ENCODE measurements at regions of chr3 and their contacts with region 1.

Region 1: GRCh38 chr3:53045518-53046170 is at the start of gene SFMBT1:
- DNase-seq: peak; percentile 74
- ATAC-seq: peak; percentile 57
- H3K4me3 Mint-ChIP-seq: peak within 1 kb of the TSS; percentile 95
- H3K27ac Mint-ChIP-seq: peak within 1 kb of the TSS; percentile 97
- H3K4me1 Mint-ChIP-seq: peaks cover 31% of the 10 kb centered on the region
- H3K27me3 Mint-ChIP-seq: no peaks in the 10 kb centered on the region
- CTCF ChIP-seq: no peak
- total RNA-seq, gene SFMBT1: 24.6 and 31.6 TPM in 2 replicates

Region 2: DNA sequence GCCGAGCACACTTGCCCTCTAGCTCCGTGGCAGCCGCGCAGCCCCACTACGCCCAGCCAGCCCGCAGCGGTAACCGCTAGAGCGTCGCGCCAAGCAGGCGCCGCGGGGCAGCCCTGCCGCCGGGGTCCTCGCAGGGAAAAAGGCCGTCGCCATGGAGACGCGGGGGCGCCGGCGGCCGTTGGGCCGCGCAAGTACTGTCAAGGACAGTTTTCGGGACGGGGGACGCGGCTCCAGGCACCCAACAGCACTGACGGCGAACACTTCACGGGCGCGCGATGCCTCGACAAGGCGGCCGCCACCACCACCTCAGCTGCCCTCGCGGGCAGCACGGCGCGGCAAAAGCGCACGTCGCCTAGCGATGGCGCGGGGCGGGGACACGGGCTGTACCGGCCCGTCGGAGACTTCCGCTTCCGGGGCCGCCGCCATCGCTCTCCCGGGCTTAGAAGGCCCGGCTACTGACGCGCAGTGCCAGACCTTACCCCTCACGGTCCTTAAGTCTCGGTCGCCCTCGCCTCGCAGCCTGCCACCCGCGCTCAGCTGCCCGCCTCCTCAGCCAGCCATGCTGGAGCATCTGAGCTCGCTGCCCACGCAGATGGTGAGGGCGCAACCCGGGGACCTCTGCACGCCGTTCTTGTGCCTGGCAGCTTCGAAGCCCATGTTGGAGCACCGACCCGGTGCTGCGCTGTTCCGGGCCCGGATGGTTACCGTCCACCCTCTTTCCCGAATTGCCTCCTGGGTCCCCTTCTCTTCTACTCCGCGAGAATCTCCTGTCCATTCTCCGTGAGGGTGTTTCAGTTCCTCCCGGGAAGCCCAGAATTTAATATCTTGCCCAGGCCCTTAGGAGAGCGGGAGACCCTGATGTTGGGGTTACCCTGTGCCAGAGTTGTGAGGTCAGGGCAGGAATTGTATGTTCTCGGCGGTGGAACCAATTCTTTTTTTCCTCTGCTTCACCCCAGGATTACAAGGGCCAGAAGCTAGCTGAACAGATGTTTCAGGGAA is 339.7 kb before region 1 on chr3 and contains the starts of genes GLT8D1 and SPCS1:
- CTCF ChIA-PET with region 1: no interaction called
- POLR2A ChIA-PET with region 1: interaction called, 7 read pairs
- intact Hi-C with region 1: loop called (anchors 1 kb)
- DNase-seq: peak; percentile 87
- ATAC-seq: peak; percentile 87
- H3K4me3 Mint-ChIP-seq: peak within 1 kb of the TSS; percentile 94
- H3K27ac Mint-ChIP-seq: peak within 1 kb of the TSS; percentile 92
- H3K4me1 Mint-ChIP-seq: peaks cover 48% of the 10 kb centered on the region
- H3K27me3 Mint-ChIP-seq: no peaks in the 10 kb centered on the region
- CTCF ChIP-seq: no peak
- total RNA-seq, gene GLT8D1: 20.4 and 22.2 TPM in 2 replicates
- total RNA-seq, gene SPCS1: 78.0 and 79.4 TPM in 2 replicates

Region 3: GRCh38 chr3:52897130-52898122 is 148.2 kb before region 1 on chr3 and contains the start of gene STIMATE:
- CTCF ChIA-PET with region 1: interaction called, 4 read pairs
- POLR2A ChIA-PET with region 1: no interaction called
- intact Hi-C with region 1: loop called (anchors 1 kb)
- DNase-seq: peak; percentile 85
- ATAC-seq: peak; percentile 97
- H3K4me3 Mint-ChIP-seq: peak within 1 kb of the TSS; percentile 87
- H3K27ac Mint-ChIP-seq: peak within 1 kb of the TSS; percentile 37
- H3K4me1 Mint-ChIP-seq: peaks cover 45% of the 10 kb centered on the region
- H3K27me3 Mint-ChIP-seq: no peaks in the 10 kb centered on the region
- CTCF ChIP-seq: no peak
- total RNA-seq, gene STIMATE: 20.8 and 25.8 TPM in 2 replicates

Region 4: DNA sequence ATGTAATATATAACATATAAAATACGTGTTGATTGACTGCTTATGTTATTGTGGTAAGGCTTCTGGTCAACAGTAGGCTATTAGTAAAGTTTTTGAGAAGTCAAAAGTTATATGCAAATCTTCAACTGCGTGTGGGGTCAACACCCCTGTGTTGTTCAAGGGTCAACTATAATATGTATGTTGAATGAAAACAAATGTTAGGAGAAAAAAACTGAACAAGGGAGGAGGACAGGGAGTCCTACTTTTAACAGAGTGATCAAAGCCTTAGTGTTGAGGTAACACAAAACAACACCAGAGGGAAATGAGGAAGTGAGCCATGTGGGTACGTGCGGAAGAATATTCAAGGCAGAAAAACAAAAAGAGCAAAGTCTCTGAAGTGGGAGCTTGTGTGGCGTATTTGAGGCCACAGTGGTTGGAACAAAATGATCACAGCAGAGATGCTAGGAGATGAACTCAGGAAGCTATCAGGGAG is 62.3 kb before region 1 on chr3:
- CTCF ChIA-PET with region 1: interaction called, 3 read pairs
- POLR2A ChIA-PET with region 1: interaction called, 22 read pairs
- intact Hi-C with region 1: loop called (anchors 1 kb)
- DNase-seq: no peak
- ATAC-seq: peak; percentile 85
- H3K4me3 Mint-ChIP-seq: peak overlapping the region; percentile 36
- H3K27ac Mint-ChIP-seq: peak overlapping the region; percentile 86
- H3K4me1 Mint-ChIP-seq: peaks cover 47% of the 10 kb centered on the region
- H3K27me3 Mint-ChIP-seq: no peaks in the 10 kb centered on the region
- CTCF ChIP-seq: no peak

Region 5: GRCh38 chr3:53030619-53031449 is 14.8 kb before region 1 on chr3:
- CTCF ChIA-PET with region 1: interaction called, 3 read pairs
- POLR2A ChIA-PET with region 1: interaction called, 10 read pairs
- intact Hi-C with region 1: loop called (anchors 2 kb)
- DNase-seq: no peak
- ATAC-seq: peak; percentile 82
- H3K4me3 Mint-ChIP-seq: peak overlapping the region; percentile 12
- H3K27ac Mint-ChIP-seq: peak overlapping the region; percentile 83
- H3K4me1 Mint-ChIP-seq: peaks cover 42% of the 10 kb centered on the region
- H3K27me3 Mint-ChIP-seq: no peaks in the 10 kb centered on the region
- CTCF ChIP-seq: no peak

Region 6: DNA sequence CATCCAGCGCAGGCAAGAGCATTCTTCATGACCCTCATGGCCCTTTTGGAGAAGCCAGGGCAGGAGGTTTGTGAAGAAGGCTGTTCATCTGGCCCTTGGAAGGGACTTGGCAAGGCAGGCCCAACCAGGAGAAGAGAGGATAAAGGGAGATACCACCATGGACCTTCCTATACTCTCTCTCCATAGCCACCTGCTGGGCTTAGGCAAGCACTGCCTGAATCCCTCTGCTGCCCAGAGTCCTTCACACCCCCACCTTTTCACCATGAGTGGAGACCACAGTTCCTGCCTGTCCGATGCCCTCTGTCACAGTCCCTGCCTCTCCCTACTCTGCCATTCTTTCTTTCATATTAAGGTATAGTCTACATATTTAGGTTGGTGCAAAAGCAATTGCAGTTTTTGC is 10.8 kb after region 1 on chr3:
- CTCF ChIA-PET with region 1: no interaction called
- POLR2A ChIA-PET with region 1: no interaction called
- intact Hi-C with region 1: no loop called
- DNase-seq: no peak
- ATAC-seq: peak; percentile 49
- H3K4me3 Mint-ChIP-seq: no peak overlapping the region
- H3K27ac Mint-ChIP-seq: no peak overlapping the region
- H3K4me1 Mint-ChIP-seq: no peaks in the 10 kb centered on the region
- H3K27me3 Mint-ChIP-seq: no peaks in the 10 kb centered on the region
- CTCF ChIP-seq: no peak

Region 7: GRCh38 chr3:53274938-53275605 is 229.4 kb after region 1 on chr3:
- CTCF ChIA-PET with region 1: no interaction called
- POLR2A ChIA-PET with region 1: no interaction called
- intact Hi-C with region 1: no loop called
- DNase-seq: no peak
- ATAC-seq: no peak
- H3K4me3 Mint-ChIP-seq: no peak overlapping the region
- H3K27ac Mint-ChIP-seq: no peak overlapping the region
- H3K4me1 Mint-ChIP-seq: no peaks in the 10 kb centered on the region
- H3K27me3 Mint-ChIP-seq: no peaks in the 10 kb centered on the region
- CTCF ChIP-seq: no peak

Region 8: DNA sequence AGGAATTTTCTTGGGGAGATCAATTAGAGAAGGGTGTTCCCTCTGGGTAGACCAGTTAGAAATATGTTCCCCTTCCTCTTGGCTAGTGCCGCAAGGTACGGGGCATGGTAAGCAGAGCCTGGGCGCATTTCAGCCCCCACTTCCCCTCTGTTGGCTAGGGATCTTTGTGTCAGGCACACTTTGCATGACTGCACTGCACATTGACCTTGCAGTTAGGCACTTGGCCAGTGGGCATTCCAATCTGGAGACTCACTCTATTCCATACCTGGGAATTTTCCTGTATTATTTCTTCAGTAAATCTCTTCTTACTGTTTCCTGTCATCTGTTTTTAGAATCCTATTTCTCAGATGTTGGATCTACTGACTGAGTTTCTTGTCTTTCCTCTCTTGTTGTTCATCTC is 418.8 kb after region 1 on chr3:
- CTCF ChIA-PET with region 1: no interaction called
- POLR2A ChIA-PET with region 1: no interaction called
- intact Hi-C with region 1: no loop called
- DNase-seq: no peak
- ATAC-seq: no peak
- H3K4me3 Mint-ChIP-seq: no peak overlapping the region
- H3K27ac Mint-ChIP-seq: no peak overlapping the region
- H3K4me1 Mint-ChIP-seq: peaks cover under 1% of the 10 kb centered on the region
- H3K27me3 Mint-ChIP-seq: peaks cover 18% of the 10 kb centered on the region
- CTCF ChIP-seq: no peak

Region 9: DNA sequence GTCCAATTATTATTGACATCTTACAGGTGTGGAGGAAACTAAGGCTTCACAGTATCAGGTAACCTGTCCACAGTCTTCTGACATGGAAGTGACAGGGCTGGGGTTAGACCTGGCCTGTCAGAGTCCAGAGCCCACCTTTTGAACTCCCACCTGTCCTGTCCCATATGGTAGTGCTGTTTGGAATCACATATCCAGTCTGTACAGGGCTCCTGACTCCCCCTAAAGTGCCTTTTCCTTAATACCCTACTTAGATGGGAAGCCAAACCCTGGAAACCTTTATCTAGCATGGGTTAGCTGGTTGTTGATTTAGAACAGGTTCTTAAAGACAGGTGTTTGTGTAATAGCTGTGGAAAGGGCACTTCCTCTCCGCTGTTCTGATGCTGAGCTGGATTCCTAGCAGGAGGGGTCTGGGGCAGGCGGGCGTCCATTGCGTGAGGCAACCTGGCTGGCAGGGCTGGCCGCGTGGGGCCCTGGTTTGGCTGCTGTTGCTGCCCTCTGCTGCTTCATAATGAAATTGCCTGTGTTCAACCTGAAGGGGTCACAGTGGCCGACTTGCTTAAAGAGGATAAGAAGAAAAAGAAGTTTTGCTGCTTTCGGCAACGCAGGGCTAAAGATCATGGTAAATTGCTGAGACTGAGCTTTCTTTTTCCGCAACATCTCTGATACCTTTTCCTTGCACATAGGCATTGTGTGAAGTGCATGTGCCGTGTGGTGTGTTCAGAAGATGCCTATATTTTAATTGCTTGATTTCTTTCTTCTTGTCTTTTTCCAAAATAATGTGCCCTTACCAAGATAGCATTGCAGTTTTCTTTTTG is 664.4 kb after region 1 on chr3:
- CTCF ChIA-PET with region 1: no interaction called
- POLR2A ChIA-PET with region 1: no interaction called
- intact Hi-C with region 1: no loop called
- DNase-seq: peak; percentile 44
- ATAC-seq: peak; percentile 80
- H3K4me3 Mint-ChIP-seq: no peak overlapping the region
- H3K27ac Mint-ChIP-seq: no peak overlapping the region
- H3K4me1 Mint-ChIP-seq: peaks cover 15% of the 10 kb centered on the region
- H3K27me3 Mint-ChIP-seq: no peaks in the 10 kb centered on the region
- CTCF ChIP-seq: peak; percentile 23

Measured in activated B cell treated with CpG ODN at 0.5 μM for 24 hours (primary cell).